ENCODE measurements at regions of chr10 and their contacts with region 1.

Region 1: GRCh38 chr10:107814865-107815487 is 650.5 kb upstream of the SORCS1 start:
- DNase-seq: peak; percentile 49 to 62
- H3K4me3 ChIP-seq: no peak overlapping the region
- H3K4me3 Mint-ChIP-seq: no peak overlapping the region
- H3K27ac Mint-ChIP-seq: no peak overlapping the region
- H3K4me1 ChIP-seq: no peaks in the 10 kb centered on the region
- H3K4me1 Mint-ChIP-seq: no peaks in the 10 kb centered on the region
- H3K27me3 ChIP-seq: no peaks in the 10 kb centered on the region
- H3K27me3 Mint-ChIP-seq: peaks cover 4% of the 10 kb centered on the region
- CTCF ChIP-seq: peak; percentile 69 to 71

Region 2: GRCh38 chr10:106625751-106626150 is 1189.2 kb before region 1 on chr10:
- CTCF ChIA-PET with region 1: no interaction called
- POLR2A ChIA-PET with region 1: no interaction called
- intact Hi-C with region 1: loop called (anchors 2 kb)
- DNase-seq: no peak
- H3K4me3 ChIP-seq: no peak overlapping the region
- H3K4me3 Mint-ChIP-seq: no peak overlapping the region
- H3K27ac Mint-ChIP-seq: no peak overlapping the region
- H3K4me1 ChIP-seq: no peaks in the 10 kb centered on the region
- H3K4me1 Mint-ChIP-seq: no peaks in the 10 kb centered on the region
- H3K27me3 ChIP-seq: no peaks in the 10 kb centered on the region
- H3K27me3 Mint-ChIP-seq: peaks cover 5% of the 10 kb centered on the region
- CTCF ChIP-seq: no peak

Measured in Caco-2 (cell line).